Activated CD8-positive, alpha-beta T cell treated with anti-CD3 and anti-CD28 coated beads for 36 hours (primary cell): ENCODE measurements at regions of chr10 and their contacts with region 1.

Region 1: GRCh38 chr10:124530215-124530665 is 68.6 kb downstream of the LHPP start:
- DNase-seq: peak; percentile 92
- ATAC-seq: peak; percentile 96
- H3K4me3 Mint-ChIP-seq: no peak overlapping the region
- H3K27ac Mint-ChIP-seq: no peak overlapping the region
- H3K4me1 Mint-ChIP-seq: peaks cover 15% of the 10 kb centered on the region
- H3K27me3 Mint-ChIP-seq: no peaks in the 10 kb centered on the region
- CTCF ChIP-seq: peak; percentile 75

Region 2: GRCh38 chr10:124579011-124579399 is 48.8 kb after region 1 on chr10:
- CTCF ChIA-PET with region 1: no interaction called
- POLR2A ChIA-PET with region 1: no interaction called
- intact Hi-C with region 1: no loop called
- DNase-seq: no peak
- ATAC-seq: no peak
- H3K4me3 Mint-ChIP-seq: no peak overlapping the region
- H3K27ac Mint-ChIP-seq: no peak overlapping the region
- H3K4me1 Mint-ChIP-seq: no peaks in the 10 kb centered on the region
- H3K27me3 Mint-ChIP-seq: no peaks in the 10 kb centered on the region
- CTCF ChIP-seq: no peak

Region 3: GRCh38 chr10:124827474-124827873 is 297.2 kb after region 1 on chr10:
- CTCF ChIA-PET with region 1: interaction called, 17 read pairs
- POLR2A ChIA-PET with region 1: no interaction called
- intact Hi-C with region 1: loop called (anchors 5 kb)
- DNase-seq: peak; percentile 15
- ATAC-seq: no peak
- H3K4me3 Mint-ChIP-seq: no peak overlapping the region
- H3K27ac Mint-ChIP-seq: no peak overlapping the region
- H3K4me1 Mint-ChIP-seq: no peaks in the 10 kb centered on the region
- H3K27me3 Mint-ChIP-seq: no peaks in the 10 kb centered on the region
- CTCF ChIP-seq: peak; percentile 73

Region 4: GRCh38 chr10:124916585-124917427 is 386.6 kb after region 1 on chr10:
- CTCF ChIA-PET with region 1: interaction called, 3 read pairs
- POLR2A ChIA-PET with region 1: no interaction called
- intact Hi-C with region 1: loop called (anchors 5 kb)
- DNase-seq: peak; percentile 97
- ATAC-seq: peak; percentile 95
- H3K4me3 Mint-ChIP-seq: peak overlapping the region; percentile 82
- H3K27ac Mint-ChIP-seq: peak overlapping the region; percentile 92
- H3K4me1 Mint-ChIP-seq: peaks cover 25% of the 10 kb centered on the region
- H3K27me3 Mint-ChIP-seq: no peaks in the 10 kb centered on the region
- CTCF ChIP-seq: no peak